Common myeloid progenitor, CD34-positive (primary cell): ENCODE measurements at regions of chr3 and their contacts with region 1.

Region 1: GRCh38 chr3:37183375-37183841 is 9.0 kb upstream of the LRRFIP2 start:
- DNase-seq: no peak
- H3K4me3 ChIP-seq: no peak overlapping the region
- H3K27ac ChIP-seq: no peak overlapping the region
- H3K4me1 ChIP-seq: peaks cover 0 to 19% (median 7%) of the 10 kb centered on the region in 4 experiments
- H3K27me3 ChIP-seq: no peaks in the 10 kb centered on the region

Region 2: GRCh38 chr3:37114251-37115145 is 68.9 kb before region 1 on chr3:
- CTCF ChIA-PET with region 1: no interaction called
- POLR2A ChIA-PET with region 1: interaction called, 10 read pairs
- DNase-seq: peak in 2 of 3 donors; percentile 25 to 47
- H3K4me3 ChIP-seq: no peak overlapping the region
- H3K27ac ChIP-seq: no peak overlapping the region
- H3K4me1 ChIP-seq: peaks cover 0 to 4% (median 0%) of the 10 kb centered on the region in 4 experiments
- H3K27me3 ChIP-seq: no peaks in the 10 kb centered on the region

Region 3: GRCh38 chr3:37171144-37171543 is 12.3 kb before region 1 on chr3:
- CTCF ChIA-PET with region 1: no interaction called
- POLR2A ChIA-PET with region 1: no interaction called
- DNase-seq: peak; percentile 83 to 97 (median 94)
- H3K4me3 ChIP-seq: peak overlapping the region in 4 of 7 experiments; percentile 15 to 53 (median 32)
- H3K27ac ChIP-seq: peak overlapping the region; percentile 17 to 38
- H3K4me1 ChIP-seq: peaks cover 18 to 70% (median 37%) of the 10 kb centered on the region in 4 experiments
- H3K27me3 ChIP-seq: no peaks in the 10 kb centered on the region